Upper lobe of right lung (tissue), 1 donor: ENCODE measurements at regions of chr1 and their contacts with region 1.

Region 1: DNA sequence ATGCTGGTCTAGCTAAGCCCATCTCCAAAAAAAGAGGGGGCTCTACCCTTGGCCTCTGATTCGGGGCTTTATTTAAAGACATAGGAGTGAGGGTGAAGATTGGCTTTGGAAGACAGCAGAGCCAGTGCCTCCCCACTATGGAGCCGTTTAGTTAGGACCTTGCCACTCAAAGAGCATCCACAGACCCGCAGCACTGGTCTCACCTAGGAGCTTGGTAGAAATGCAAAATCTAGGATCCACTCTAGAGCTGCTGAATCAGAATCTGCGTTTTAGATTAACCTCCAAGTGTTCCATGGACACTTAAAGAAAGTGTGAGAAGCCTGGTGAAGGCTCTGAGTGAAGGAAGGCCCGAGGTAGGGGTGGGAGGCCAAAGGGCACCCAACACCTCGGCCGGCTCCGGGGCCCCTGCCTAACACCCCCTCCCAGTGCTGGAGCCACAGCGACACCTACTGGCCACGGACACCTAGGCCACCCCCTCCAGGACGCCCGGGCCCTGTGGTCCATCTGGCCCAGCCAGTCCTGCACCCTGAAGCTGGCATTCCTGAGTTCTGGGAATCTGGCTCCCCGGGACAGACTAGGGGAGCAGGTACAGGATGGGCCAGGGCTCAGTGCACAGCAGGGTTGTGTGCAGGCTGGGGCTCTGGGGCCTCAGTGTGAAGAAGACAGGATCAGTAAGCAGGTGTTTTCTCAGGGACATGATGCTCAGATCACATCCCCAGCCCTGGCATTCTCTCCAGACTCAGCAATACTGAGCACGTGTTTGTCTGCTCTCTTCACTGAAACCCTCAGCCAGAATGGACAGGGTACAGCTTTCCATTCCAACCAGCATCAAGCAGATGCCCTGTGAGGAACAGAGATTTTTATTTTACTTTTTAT is 79.2 kb downstream of the TMEM53 start:
- DNase-seq: peak; percentile 91
- ATAC-seq: peak; percentile 97
- H3K4me3 ChIP-seq: no peak overlapping the region
- H3K27ac ChIP-seq: no peak overlapping the region
- H3K4me1 ChIP-seq: no peaks in the 10 kb centered on the region
- H3K27me3 ChIP-seq: no peaks in the 10 kb centered on the region
- CTCF ChIP-seq: peak; percentile 98

Region 2: DNA sequence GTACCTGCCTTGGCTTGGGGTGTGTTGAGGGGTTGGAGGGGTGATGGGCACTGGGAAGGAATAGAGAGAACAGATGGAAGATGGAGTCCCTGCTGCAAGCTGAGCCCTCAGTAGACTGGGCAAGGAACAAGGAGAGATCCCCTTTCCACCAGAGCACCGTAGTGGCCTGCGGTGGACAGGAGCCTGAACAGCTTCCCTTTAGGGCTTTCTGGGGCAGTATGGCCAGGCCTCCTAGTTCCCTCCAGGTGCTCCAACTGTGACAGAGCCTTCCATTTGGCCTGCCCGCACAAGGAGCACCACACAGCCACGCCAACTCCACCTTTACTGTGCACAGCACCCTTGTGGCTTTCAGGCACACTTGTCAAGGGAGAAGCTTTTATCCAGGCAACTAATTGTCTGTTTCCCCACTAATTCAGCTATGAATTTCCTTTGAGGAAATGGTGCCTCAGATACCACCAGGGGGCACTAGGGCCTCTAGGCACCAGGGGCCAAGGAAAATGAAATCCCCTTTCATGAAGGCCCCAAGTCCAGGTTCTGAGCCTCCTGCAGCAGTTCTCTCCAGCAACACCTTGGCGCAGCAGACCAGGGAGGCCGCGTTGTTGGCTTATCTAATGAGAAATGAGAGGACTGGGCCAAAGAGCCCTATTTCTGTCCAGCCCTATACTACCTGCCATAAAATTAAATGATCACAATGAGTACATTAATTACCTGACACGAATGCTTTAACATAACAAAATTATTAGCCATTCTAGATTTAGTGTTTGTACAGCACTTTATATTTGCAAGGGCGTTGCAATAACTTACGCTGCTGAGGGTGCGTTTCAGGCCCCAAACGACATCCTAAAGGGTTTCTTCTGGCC is 217.0 kb before region 1 on chr1:
- intact Hi-C with region 1: loop called (anchors 5 kb)
- DNase-seq: no peak
- ATAC-seq: peak; percentile 86
- H3K4me3 ChIP-seq: no peak overlapping the region
- H3K27ac ChIP-seq: no peak overlapping the region
- H3K4me1 ChIP-seq: no peaks in the 10 kb centered on the region
- H3K27me3 ChIP-seq: no peaks in the 10 kb centered on the region
- CTCF ChIP-seq: peak; percentile 67

Region 3: GRCh38 chr1:44799770-44800584 is 204.9 kb after region 1 on chr1 and contains the start of gene PLK3:
- intact Hi-C with region 1: no loop called
- DNase-seq: peak; percentile 98
- ATAC-seq: peak; percentile 96
- H3K4me3 ChIP-seq: peak within 1 kb of the TSS; percentile 84
- H3K27ac ChIP-seq: peak within 1 kb of the TSS; percentile 96
- H3K4me1 ChIP-seq: peaks cover 30% of the 10 kb centered on the region
- H3K27me3 ChIP-seq: no peaks in the 10 kb centered on the region
- CTCF ChIP-seq: peak; percentile 86
- total RNA-seq, gene PLK3: 38.8 TPM